ENCODE measurements at regions of chr17 and their contacts with region 1.

Region 1: GRCh38 chr17:58447039-58447975 is 30.0 kb upstream of the RNF43 start:
- DNase-seq: peak; percentile 86
- H3K4me3 Mint-ChIP-seq: no peak overlapping the region
- H3K27ac Mint-ChIP-seq: no peak overlapping the region
- H3K4me1 Mint-ChIP-seq: peaks cover 1% of the 10 kb centered on the region
- H3K27me3 Mint-ChIP-seq: no peaks in the 10 kb centered on the region

Region 2: DNA sequence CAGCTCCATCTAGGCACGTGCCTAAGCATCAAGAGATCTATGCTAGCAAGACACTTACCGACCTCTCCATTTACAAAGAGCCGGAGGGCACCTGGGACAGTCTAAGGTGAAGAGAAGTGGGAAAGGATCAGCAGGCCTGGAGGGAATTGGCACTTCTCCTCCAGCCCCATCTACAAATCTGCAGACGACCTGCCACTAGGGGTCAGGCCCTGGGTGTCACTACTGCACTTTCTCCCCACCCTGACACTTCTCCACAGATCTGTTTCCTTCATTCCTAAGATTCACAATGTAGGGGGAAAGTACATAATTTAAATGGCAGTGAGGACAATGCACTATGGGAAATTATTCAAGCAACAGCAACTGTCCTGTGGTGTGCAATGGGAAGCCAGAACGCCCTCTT is 236.4 kb before region 1 on chr17:
- CTCF ChIA-PET with region 1: no interaction called
- intact Hi-C with region 1: no loop called
- DNase-seq: no peak
- H3K4me3 Mint-ChIP-seq: no peak overlapping the region
- H3K27ac Mint-ChIP-seq: no peak overlapping the region
- H3K4me1 Mint-ChIP-seq: no peaks in the 10 kb centered on the region
- H3K27me3 Mint-ChIP-seq: no peaks in the 10 kb centered on the region

Region 3: DNA sequence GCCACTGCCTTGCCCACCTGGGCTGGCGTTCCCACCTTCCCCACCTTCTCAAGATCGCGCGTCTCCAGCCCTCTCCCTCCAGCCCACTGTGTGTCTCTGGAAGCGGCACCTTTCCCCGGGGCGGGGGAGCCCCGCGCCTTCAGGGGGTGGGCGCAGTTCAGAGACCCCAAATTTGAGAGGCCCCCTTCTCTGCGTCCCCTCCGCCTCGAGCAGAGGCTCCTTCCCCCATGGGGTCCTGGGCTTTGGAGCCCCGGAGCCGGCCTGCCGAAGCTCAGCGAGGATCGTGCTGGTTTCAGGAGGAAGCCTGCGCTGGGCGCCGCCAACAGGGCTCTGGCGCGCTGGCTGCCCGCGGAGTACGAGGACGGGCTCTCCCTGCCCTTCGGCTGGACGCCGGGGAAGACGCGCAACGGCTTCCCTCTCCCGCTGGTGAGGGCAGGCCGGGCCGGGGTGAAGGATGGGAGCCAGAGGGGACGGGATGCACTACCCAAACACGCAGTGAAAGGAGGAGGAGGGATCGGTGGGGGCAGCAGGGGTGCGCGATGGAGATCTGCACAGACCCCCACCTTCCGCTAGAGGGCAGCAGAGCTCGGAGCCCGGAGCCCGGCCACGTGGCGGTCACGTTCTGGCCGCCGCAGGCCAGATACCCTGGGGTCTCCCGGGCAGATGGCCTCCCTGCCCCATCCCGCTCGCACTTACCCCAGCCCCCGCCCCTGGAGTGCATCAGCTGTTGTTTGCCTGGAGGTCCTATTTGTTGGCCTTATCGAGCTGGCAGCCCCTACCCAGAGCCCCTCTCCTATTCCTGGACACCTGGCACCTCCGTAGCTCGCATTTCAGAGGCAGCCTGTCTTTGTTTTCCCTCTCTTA is 197.8 kb before region 1 on chr17:
- CTCF ChIA-PET with region 1: interaction called, 9 read pairs
- intact Hi-C with region 1: loop called (anchors 1 kb)
- DNase-seq: peak; percentile 82
- H3K4me3 Mint-ChIP-seq: peak overlapping the region; percentile 72
- H3K27ac Mint-ChIP-seq: no peak overlapping the region
- H3K4me1 Mint-ChIP-seq: peaks cover 11% of the 10 kb centered on the region
- H3K27me3 Mint-ChIP-seq: peaks cover 3% of the 10 kb centered on the region

Region 4: GRCh38 chr17:58277107-58277801 is 170.1 kb before region 1 on chr17:
- CTCF ChIA-PET with region 1: no interaction called
- intact Hi-C with region 1: loop called (anchors 1 kb)
- DNase-seq: peak; percentile 35
- H3K4me3 Mint-ChIP-seq: no peak overlapping the region
- H3K27ac Mint-ChIP-seq: no peak overlapping the region
- H3K4me1 Mint-ChIP-seq: peaks cover 4% of the 10 kb centered on the region
- H3K27me3 Mint-ChIP-seq: peaks cover 22% of the 10 kb centered on the region

Region 5: GRCh38 chr17:58615768-58616659 is 168.7 kb after region 1 on chr17:
- CTCF ChIA-PET with region 1: no interaction called
- intact Hi-C with region 1: no loop called
- DNase-seq: no peak
- H3K4me3 Mint-ChIP-seq: no peak overlapping the region
- H3K27ac Mint-ChIP-seq: no peak overlapping the region
- H3K4me1 Mint-ChIP-seq: peaks cover 4% of the 10 kb centered on the region
- H3K27me3 Mint-ChIP-seq: no peaks in the 10 kb centered on the region

Region 6: GRCh38 chr17:58631523-58632323 is 184.4 kb after region 1 on chr17:
- CTCF ChIA-PET with region 1: no interaction called
- intact Hi-C with region 1: no loop called
- DNase-seq: peak; percentile 98
- H3K4me3 Mint-ChIP-seq: no peak overlapping the region
- H3K27ac Mint-ChIP-seq: no peak overlapping the region
- H3K4me1 Mint-ChIP-seq: peaks cover 3% of the 10 kb centered on the region
- H3K27me3 Mint-ChIP-seq: no peaks in the 10 kb centered on the region

Measured in activated naive CD4-positive, alpha-beta T cell treated with anti-CD3 and anti-CD28 coated beads for 36 hours (primary cell).